ENCODE measurements at regions of chr10 and their contacts with region 1.

Region 1: GRCh38 chr10:60032723-60033122 is 126.4 kb upstream of the CCDC6 start:
- DNase-seq: peak in 5 of 9 experiments; percentile 22 to 58 (median 28)
- ATAC-seq: no peak
- H3K4me3 ChIP-seq: no peak overlapping the region
- H3K4me3 Mint-ChIP-seq: no peak overlapping the region
- H3K27ac ChIP-seq: no peak overlapping the region
- H3K27ac Mint-ChIP-seq: no peak overlapping the region
- H3K4me1 ChIP-seq: no peaks in the 10 kb centered on the region
- H3K4me1 Mint-ChIP-seq: no peaks in the 10 kb centered on the region
- H3K27me3 ChIP-seq: no peaks in the 10 kb centered on the region
- H3K27me3 Mint-ChIP-seq: peaks cover 4% of the 10 kb centered on the region
- CTCF ChIP-seq: peak; percentile 34

Region 2: DNA sequence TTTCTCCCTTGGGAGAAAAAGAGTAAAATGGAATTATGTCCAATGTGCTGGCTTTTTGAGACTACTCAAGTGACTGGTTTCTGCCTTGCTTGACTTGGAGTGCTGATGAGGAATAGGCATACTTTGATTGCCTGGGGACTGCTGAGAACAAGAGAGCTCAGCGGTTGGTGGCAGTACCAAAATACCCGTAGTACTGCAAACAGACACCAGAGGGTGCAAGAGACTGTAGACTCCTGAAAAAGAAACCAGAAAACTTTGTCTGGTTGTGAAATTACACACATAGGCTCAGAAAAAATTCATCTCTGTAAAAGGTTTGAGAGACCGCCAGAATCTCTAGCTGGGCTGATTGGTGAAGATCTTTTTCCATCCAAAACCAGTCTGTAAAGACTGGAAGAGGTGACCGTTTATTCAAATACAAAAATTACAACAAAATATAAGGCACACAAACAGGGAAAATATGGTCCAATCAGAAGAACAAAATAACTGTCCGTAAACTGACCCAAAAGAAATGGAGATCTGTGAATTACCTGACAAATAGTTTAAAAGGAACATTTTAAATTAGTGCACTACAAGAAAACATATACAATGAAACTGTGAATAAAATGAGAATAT is 1501.5 kb before region 1 on chr10:
- CTCF ChIA-PET with region 1: no interaction called
- POLR2A ChIA-PET with region 1: no interaction called
- intact Hi-C with region 1: loop called (anchors 5 to 10 kb)
- DNase-seq: peak in 7 of 9 experiments; percentile 12 to 52 (median 40)
- ATAC-seq: peak; percentile 57
- H3K4me3 ChIP-seq: no peak overlapping the region
- H3K4me3 Mint-ChIP-seq: no peak overlapping the region
- H3K27ac ChIP-seq: no peak overlapping the region
- H3K27ac Mint-ChIP-seq: no peak overlapping the region
- H3K4me1 ChIP-seq: no peaks in the 10 kb centered on the region
- H3K4me1 Mint-ChIP-seq: no peaks in the 10 kb centered on the region
- H3K27me3 ChIP-seq: no peaks in the 10 kb centered on the region
- H3K27me3 Mint-ChIP-seq: peaks cover 5% of the 10 kb centered on the region
- CTCF ChIP-seq: peak; percentile 75

Region 3: GRCh38 chr10:58781873-58782488 is 1250.7 kb before region 1 on chr10:
- CTCF ChIA-PET with region 1: no interaction called
- POLR2A ChIA-PET with region 1: no interaction called
- intact Hi-C with region 1: loop called (anchors 5 kb)
- DNase-seq: peak in 2 of 9 experiments; percentile 14 to 21
- ATAC-seq: no peak
- H3K4me3 ChIP-seq: no peak overlapping the region
- H3K4me3 Mint-ChIP-seq: no peak overlapping the region
- H3K27ac ChIP-seq: no peak overlapping the region
- H3K27ac Mint-ChIP-seq: no peak overlapping the region
- H3K4me1 ChIP-seq: no peaks in the 10 kb centered on the region
- H3K4me1 Mint-ChIP-seq: no peaks in the 10 kb centered on the region
- H3K27me3 ChIP-seq: no peaks in the 10 kb centered on the region
- H3K27me3 Mint-ChIP-seq: no peaks in the 10 kb centered on the region
- CTCF ChIP-seq: peak; percentile 45

Region 4: GRCh38 chr10:59240582-59241183 is 792.0 kb before region 1 on chr10:
- CTCF ChIA-PET with region 1: no interaction called
- POLR2A ChIA-PET with region 1: no interaction called
- intact Hi-C with region 1: loop called in 1 of 2 experiments (anchors 10 kb)
- DNase-seq: peak in 1 of 9 experiments; percentile 2
- ATAC-seq: no peak
- H3K4me3 ChIP-seq: no peak overlapping the region
- H3K4me3 Mint-ChIP-seq: no peak overlapping the region
- H3K27ac ChIP-seq: no peak overlapping the region
- H3K27ac Mint-ChIP-seq: no peak overlapping the region
- H3K4me1 ChIP-seq: no peaks in the 10 kb centered on the region
- H3K4me1 Mint-ChIP-seq: no peaks in the 10 kb centered on the region
- H3K27me3 ChIP-seq: no peaks in the 10 kb centered on the region
- H3K27me3 Mint-ChIP-seq: no peaks in the 10 kb centered on the region
- CTCF ChIP-seq: peak; percentile 25

Region 5: GRCh38 chr10:59865101-59865500 is 167.6 kb before region 1 on chr10:
- CTCF ChIA-PET with region 1: interaction called, 4 read pairs
- POLR2A ChIA-PET with region 1: no interaction called
- intact Hi-C with region 1: loop called (anchors 5 kb)
- DNase-seq: peak in 2 of 9 experiments; percentile 44 to 60
- ATAC-seq: peak; percentile 35
- H3K4me3 ChIP-seq: no peak overlapping the region
- H3K4me3 Mint-ChIP-seq: peak overlapping the region; percentile 5
- H3K27ac ChIP-seq: no peak overlapping the region
- H3K27ac Mint-ChIP-seq: peak overlapping the region; percentile 46
- H3K4me1 ChIP-seq: peaks cover 24% of the 10 kb centered on the region
- H3K4me1 Mint-ChIP-seq: peaks cover 63% of the 10 kb centered on the region
- H3K27me3 ChIP-seq: no peaks in the 10 kb centered on the region
- H3K27me3 Mint-ChIP-seq: no peaks in the 10 kb centered on the region
- CTCF ChIP-seq: peak; percentile 24